T-cell (primary cell): ENCODE measurements at regions of chr14 and their contacts with region 1.

Region 1: GRCh38 chr14:91119556-91120311 is 5.9 kb downstream of the DGLUCY start:
- DNase-seq: no peak
- ATAC-seq: no peak
- H3K4me3 ChIP-seq: no peak overlapping the region
- H3K4me3 Mint-ChIP-seq: peak overlapping the region in 1 of 3 donors; percentile 8
- H3K27ac ChIP-seq: no peak overlapping the region
- H3K27ac Mint-ChIP-seq: peak overlapping the region; percentile 61 to 82
- H3K4me1 ChIP-seq: peaks cover 11 to 64% of the 10 kb centered on the region in 2 experiments
- H3K4me1 Mint-ChIP-seq: peaks cover 74 to 79% (median 77%) of the 10 kb centered on the region in 3 donors
- H3K27me3 ChIP-seq: no peaks in the 10 kb centered on the region
- H3K27me3 Mint-ChIP-seq: no peaks in the 10 kb centered on the region

Region 2: GRCh38 chr14:90892970-90893369 is 226.8 kb before region 1 on chr14:
- CTCF ChIA-PET with region 1: no interaction called
- POLR2A ChIA-PET with region 1: no interaction called
- DNase-seq: no peak
- ATAC-seq: no peak
- H3K4me3 ChIP-seq: no peak overlapping the region
- H3K4me3 Mint-ChIP-seq: no peak overlapping the region
- H3K27ac ChIP-seq: no peak overlapping the region
- H3K27ac Mint-ChIP-seq: no peak overlapping the region
- H3K4me1 ChIP-seq: no peaks in the 10 kb centered on the region
- H3K4me1 Mint-ChIP-seq: no peaks in the 10 kb centered on the region
- H3K27me3 ChIP-seq: no peaks in the 10 kb centered on the region
- H3K27me3 Mint-ChIP-seq: no peaks in the 10 kb centered on the region

Region 3: GRCh38 chr14:90991690-90992443 is 127.9 kb before region 1 on chr14:
- CTCF ChIA-PET with region 1: no interaction called
- POLR2A ChIA-PET with region 1: interaction called, 4 to 11 read pairs
- DNase-seq: no peak
- ATAC-seq: no peak
- H3K4me3 ChIP-seq: no peak overlapping the region
- H3K4me3 Mint-ChIP-seq: no peak overlapping the region
- H3K27ac ChIP-seq: no peak overlapping the region
- H3K27ac Mint-ChIP-seq: no peak overlapping the region
- H3K4me1 ChIP-seq: no peaks in the 10 kb centered on the region
- H3K4me1 Mint-ChIP-seq: peaks cover 2 to 14% (median 14%) of the 10 kb centered on the region in 3 donors
- H3K27me3 ChIP-seq: no peaks in the 10 kb centered on the region
- H3K27me3 Mint-ChIP-seq: no peaks in the 10 kb centered on the region

Region 4: GRCh38 chr14:91029456-91030217 is 90.1 kb before region 1 on chr14:
- CTCF ChIA-PET with region 1: no interaction called
- POLR2A ChIA-PET with region 1: interaction called, 4 to 11 read pairs
- DNase-seq: no peak
- ATAC-seq: no peak
- H3K4me3 ChIP-seq: no peak overlapping the region
- H3K4me3 Mint-ChIP-seq: no peak overlapping the region
- H3K27ac ChIP-seq: no peak overlapping the region
- H3K27ac Mint-ChIP-seq: no peak overlapping the region
- H3K4me1 ChIP-seq: peaks cover 0 to 7% of the 10 kb centered on the region in 2 experiments
- H3K4me1 Mint-ChIP-seq: peaks cover 49 to 55% (median 51%) of the 10 kb centered on the region in 3 donors
- H3K27me3 ChIP-seq: no peaks in the 10 kb centered on the region
- H3K27me3 Mint-ChIP-seq: no peaks in the 10 kb centered on the region

Region 5: GRCh38 chr14:91144425-91145145 is 24.9 kb after region 1 on chr14:
- CTCF ChIA-PET with region 1: no interaction called
- POLR2A ChIA-PET with region 1: no interaction called
- DNase-seq: no peak
- ATAC-seq: no peak
- H3K4me3 ChIP-seq: no peak overlapping the region
- H3K4me3 Mint-ChIP-seq: no peak overlapping the region
- H3K27ac ChIP-seq: no peak overlapping the region
- H3K27ac Mint-ChIP-seq: peak overlapping the region; percentile 31 to 42
- H3K4me1 ChIP-seq: peaks cover 8 to 35% of the 10 kb centered on the region in 2 experiments
- H3K4me1 Mint-ChIP-seq: peaks cover 39 to 53% (median 40%) of the 10 kb centered on the region in 3 donors
- H3K27me3 ChIP-seq: no peaks in the 10 kb centered on the region
- H3K27me3 Mint-ChIP-seq: no peaks in the 10 kb centered on the region

Region 6: GRCh38 chr14:91396959-91397815 is 277.5 kb after region 1 on chr14:
- CTCF ChIA-PET with region 1: no interaction called
- POLR2A ChIA-PET with region 1: no interaction called
- DNase-seq: peak in 34 of 35 experiments; percentile 44 to 75 (median 62)
- ATAC-seq: peak; percentile 69 to 81 (median 77)
- H3K4me3 ChIP-seq: peak overlapping the region; percentile 30 to 49
- H3K4me3 Mint-ChIP-seq: peak overlapping the region; percentile 71 to 98 (median 98)
- H3K27ac ChIP-seq: peak overlapping the region; percentile 85
- H3K27ac Mint-ChIP-seq: peak overlapping the region; percentile 91 to 92
- H3K4me1 ChIP-seq: peaks cover 79 to 95% of the 10 kb centered on the region in 2 experiments
- H3K4me1 Mint-ChIP-seq: peaks cover 96 to 99% (median 96%) of the 10 kb centered on the region in 3 donors
- H3K27me3 ChIP-seq: no peaks in the 10 kb centered on the region
- H3K27me3 Mint-ChIP-seq: no peaks in the 10 kb centered on the region